Activated CD4-positive, alpha-beta T cell treated with anti-CD3 and anti-CD28 coated beads for 36 hours (primary cell): ENCODE measurements at regions of chrX and their contacts with region 1.

Region 1: GRCh38 chrX:63809173-63809572 is 24.2 kb upstream of the ARHGEF9 start:
- DNase-seq: no peak
- ATAC-seq: no peak
- H3K4me3 Mint-ChIP-seq: no peak overlapping the region
- H3K27ac Mint-ChIP-seq: no peak overlapping the region
- H3K4me1 Mint-ChIP-seq: no peaks in the 10 kb centered on the region
- H3K27me3 Mint-ChIP-seq: no peaks in the 10 kb centered on the region

Region 2: DNA sequence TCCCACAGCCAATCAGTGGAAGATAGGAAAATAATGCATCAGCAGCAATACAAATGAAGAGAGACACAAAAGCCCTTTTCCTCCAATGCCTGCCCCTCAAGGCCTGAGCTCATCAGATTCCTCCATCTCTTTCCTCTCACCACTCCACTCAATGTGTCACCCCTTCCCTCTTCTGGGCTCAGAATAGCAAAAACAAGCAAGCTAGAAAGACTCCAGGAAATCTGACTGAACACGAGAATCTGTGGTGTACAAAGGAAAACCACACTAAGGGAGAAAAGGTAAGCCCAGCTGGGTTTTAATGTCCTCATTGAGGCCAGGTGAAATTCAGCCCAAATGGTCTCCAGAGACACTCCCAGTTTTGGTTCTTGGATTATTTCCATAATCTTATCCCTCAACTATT is 70.5 kb before region 1 on chrX:
- CTCF ChIA-PET with region 1: no interaction called
- POLR2A ChIA-PET with region 1: no interaction called
- intact Hi-C with region 1: loop called in 1 of 2 experiments (anchors 10 kb)
- DNase-seq: no peak
- ATAC-seq: peak; percentile 57
- H3K4me3 Mint-ChIP-seq: no peak overlapping the region
- H3K27ac Mint-ChIP-seq: no peak overlapping the region
- H3K4me1 Mint-ChIP-seq: peaks cover 10% of the 10 kb centered on the region
- H3K27me3 Mint-ChIP-seq: no peaks in the 10 kb centered on the region